ENCODE measurements at regions of chr22 and their contacts with region 1.

Region 1: DNA sequence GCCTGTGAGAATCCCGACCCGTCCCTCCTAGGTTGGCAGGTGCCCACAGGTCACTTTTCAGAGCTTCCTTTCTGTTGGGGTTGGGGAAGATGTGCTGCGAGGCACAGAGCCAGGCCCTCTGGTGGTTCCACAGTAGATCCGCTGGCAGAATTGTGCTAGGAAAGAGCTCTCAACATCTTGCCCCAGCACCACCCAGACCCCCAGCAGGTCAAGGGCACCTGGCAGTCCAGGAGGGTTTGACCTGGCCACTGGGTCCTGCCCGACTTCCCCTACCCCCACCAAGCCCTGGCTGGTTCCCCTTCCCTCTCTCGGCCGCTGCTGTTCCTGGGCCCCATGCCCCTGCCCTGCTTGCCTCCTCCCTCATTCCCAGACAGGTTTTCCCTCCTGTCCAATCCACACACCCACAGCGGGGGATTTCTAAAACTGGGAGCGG is 26.2 kb upstream of the GCAT start:
- DNase-seq: peak; percentile 42
- ATAC-seq: peak; percentile 60
- H3K4me3 ChIP-seq: peak overlapping the region in 1 of 3 experiments; percentile 60; a peak in 1 of 6 replicates
- H3K27ac ChIP-seq: no peak overlapping the region
- H3K4me1 ChIP-seq: peaks cover 84% of the 10 kb centered on the region
- H3K27me3 ChIP-seq: no peaks in the 10 kb centered on the region
- CTCF ChIP-seq: peak; percentile 68
- EP300 ChIP-seq: no peak
- POLR2A ChIP-seq: no peak
- RAD21 ChIP-seq: 0 out of 2 replicates have a peak, but pooled peaks have one; percentile 44

Region 2: DNA sequence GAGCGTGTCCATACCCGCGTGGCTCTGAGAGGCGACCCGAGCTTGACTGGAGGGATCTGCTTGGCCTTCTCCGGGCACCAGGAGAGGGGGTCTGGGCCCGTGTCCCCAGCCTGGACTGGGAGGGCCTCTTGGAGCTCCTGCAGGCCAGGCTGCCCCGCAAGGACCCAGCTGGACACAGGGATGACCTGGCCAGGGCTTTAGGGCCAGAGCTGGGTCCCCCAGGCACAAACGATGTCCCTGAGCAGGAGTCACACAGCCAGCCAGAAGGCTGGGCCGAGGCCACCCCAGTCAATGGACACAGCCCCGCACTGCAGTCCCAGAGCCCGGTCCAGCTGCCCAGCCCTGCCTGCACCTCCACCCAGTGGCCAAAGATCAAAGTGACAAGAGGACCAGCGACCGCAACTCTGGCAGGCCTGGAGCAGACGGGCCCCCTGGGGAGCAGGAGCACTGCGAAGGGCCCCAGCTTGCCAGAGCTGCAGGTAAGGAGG is 46.5 kb before region 1 on chr22:
- CTCF ChIA-PET with region 1: no interaction called
- POLR2A ChIA-PET with region 1: interaction called, 3 read pairs
- in situ Hi-C with region 1: no loop called
- intact Hi-C with region 1: loop called (anchors 1 kb)
- DNase-seq: peak; percentile 72
- ATAC-seq: peak; percentile 86
- H3K4me3 ChIP-seq: peak overlapping the region; percentile 43 to 61 (median 49); a peak in 4 of 6 replicates
- H3K27ac ChIP-seq: peak overlapping the region; percentile 31
- H3K4me1 ChIP-seq: peaks cover 79% of the 10 kb centered on the region
- H3K27me3 ChIP-seq: no peaks in the 10 kb centered on the region
- CTCF ChIP-seq: peak; percentile 96
- EP300 ChIP-seq: no peak
- POLR2A ChIP-seq: no peak
- RAD21 ChIP-seq: peak; percentile 90

Region 3: DNA sequence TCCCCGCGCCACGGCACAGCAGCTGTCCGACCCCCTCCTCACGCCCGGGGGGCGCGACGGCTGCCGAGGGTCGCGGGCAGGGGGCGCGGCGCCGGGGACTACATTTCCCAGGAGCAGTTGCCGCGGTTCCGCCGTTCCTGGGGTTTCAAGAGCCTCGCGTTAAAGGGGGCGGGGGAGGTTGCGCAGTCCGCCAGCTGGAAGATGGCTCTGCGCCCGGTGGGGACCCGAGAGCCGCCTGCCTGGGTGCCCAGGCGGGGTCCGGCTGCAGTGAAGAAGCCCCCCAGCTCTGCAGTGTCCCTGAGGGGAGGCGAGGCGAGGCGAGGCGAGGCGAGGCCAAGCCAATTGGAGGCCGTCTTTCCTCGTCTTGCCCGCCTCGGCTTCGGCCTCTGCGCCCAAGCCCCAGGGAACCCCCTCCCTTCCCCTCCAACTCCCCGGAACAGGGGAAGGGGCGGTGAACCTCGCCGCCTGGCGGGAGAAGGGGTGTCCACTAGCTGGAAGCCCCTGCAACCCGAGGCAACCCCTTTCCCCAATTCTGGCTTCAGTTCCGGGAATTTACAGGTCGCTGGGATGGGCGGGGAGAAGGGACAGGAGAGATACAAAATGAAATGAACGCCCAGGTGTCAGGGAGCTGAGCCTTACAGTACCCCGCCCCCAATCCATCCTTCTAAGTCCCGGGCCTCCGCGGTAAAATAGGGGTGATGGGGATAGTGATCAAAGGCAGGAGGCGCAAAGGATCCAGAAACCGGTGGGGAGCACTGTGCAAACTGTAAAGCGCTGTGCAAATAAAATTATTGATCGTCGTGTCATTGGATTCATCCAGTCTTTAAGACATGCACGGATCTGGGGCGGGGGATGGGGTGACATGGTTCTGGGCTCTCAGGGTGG is 21.1 kb after region 1 on chr22:
- CTCF ChIA-PET with region 1: no interaction called
- POLR2A ChIA-PET with region 1: interaction called, 127 read pairs
- in situ Hi-C with region 1: no loop called
- intact Hi-C with region 1: loop called (anchors 2 kb)
- DNase-seq: peak; percentile 54
- ATAC-seq: peak; percentile 58
- H3K4me3 ChIP-seq: peak overlapping the region; percentile 78 to 95 (median 93)
- H3K27ac ChIP-seq: peak overlapping the region; percentile 77
- H3K4me1 ChIP-seq: peaks cover 25% of the 10 kb centered on the region
- H3K27me3 ChIP-seq: no peaks in the 10 kb centered on the region; a peak in 1 of 5 replicates
- CTCF ChIP-seq: peak; percentile 40
- EP300 ChIP-seq: peak in 1 of 2 experiments; percentile 27; a peak in 1 of 4 replicates
- POLR2A ChIP-seq: peak; percentile 40 to 53; a peak in 3 of 4 replicates
- RAD21 ChIP-seq: peak; percentile 6; the same call in 1 of the 2 replicates

Region 4: DNA sequence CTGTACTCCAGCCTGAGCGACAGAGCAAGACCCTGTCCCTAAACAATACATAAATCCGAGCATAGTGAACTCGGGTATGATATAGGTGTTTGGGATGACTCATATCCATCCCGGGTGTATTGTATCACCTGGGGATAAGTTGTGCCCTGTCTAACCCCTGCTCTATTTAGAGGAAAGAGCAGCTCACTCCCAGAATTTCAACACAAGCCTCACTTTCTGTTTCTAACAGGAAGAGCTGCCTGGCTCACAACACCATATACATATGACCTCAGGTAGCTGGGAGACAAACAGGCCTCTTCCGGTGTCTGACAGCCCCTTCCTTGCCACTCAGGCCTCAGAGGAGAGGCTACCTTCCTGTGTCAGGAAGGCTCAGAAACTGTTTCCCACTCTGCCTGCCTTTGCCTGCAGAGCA is 114.7 kb after region 1 on chr22:
- CTCF ChIA-PET with region 1: no interaction called
- POLR2A ChIA-PET with region 1: no interaction called
- in situ Hi-C with region 1: no loop called
- intact Hi-C with region 1: no loop called
- DNase-seq: peak; percentile 90
- ATAC-seq: peak; percentile 80
- H3K4me3 ChIP-seq: peak overlapping the region; percentile 19 to 47 (median 28); a peak in 5 of 6 replicates
- H3K27ac ChIP-seq: peak overlapping the region; percentile 80
- H3K4me1 ChIP-seq: peaks cover 82% of the 10 kb centered on the region
- H3K27me3 ChIP-seq: no peaks in the 10 kb centered on the region
- CTCF ChIP-seq: no peak
- EP300 ChIP-seq: 0 out of 4 replicates have a peak, but pooled peaks of 1 of the 2 experiments have one; percentile 16
- POLR2A ChIP-seq: no peak
- RAD21 ChIP-seq: no peak

Region 5: DNA sequence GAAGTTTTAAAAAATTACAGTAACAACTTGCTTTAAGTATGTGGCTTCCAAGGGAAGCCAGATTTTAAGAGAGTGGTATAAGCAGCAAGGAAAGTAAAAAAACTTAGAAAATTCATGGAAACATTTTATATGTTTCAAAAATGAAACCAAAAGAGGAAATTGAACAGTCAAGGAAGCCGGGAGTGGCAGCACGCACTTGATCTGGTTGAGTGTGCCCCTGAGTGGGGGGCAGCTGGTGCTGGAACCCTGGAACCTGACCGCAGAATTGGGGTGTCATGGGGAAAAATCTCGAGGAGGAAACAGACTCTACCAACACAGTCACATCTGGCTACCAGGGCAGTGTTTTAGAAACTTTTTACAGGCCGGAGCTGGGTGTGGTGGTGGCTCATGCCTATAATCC is 138.6 kb after region 1 on chr22:
- CTCF ChIA-PET with region 1: no interaction called
- POLR2A ChIA-PET with region 1: no interaction called
- in situ Hi-C with region 1: no loop called
- intact Hi-C with region 1: no loop called
- DNase-seq: no peak
- ATAC-seq: no peak
- H3K4me3 ChIP-seq: no peak overlapping the region
- H3K27ac ChIP-seq: no peak overlapping the region
- H3K4me1 ChIP-seq: no peaks in the 10 kb centered on the region; the same call in 1 of the 2 replicates
- H3K27me3 ChIP-seq: no peaks in the 10 kb centered on the region
- CTCF ChIP-seq: no peak
- EP300 ChIP-seq: no peak
- POLR2A ChIP-seq: no peak
- RAD21 ChIP-seq: no peak

Measured in HepG2 (cell line).